Posterior vena cava (tissue), 2 donors: ENCODE measurements at regions of chr19 and their contacts with region 1.

Region 1: DNA sequence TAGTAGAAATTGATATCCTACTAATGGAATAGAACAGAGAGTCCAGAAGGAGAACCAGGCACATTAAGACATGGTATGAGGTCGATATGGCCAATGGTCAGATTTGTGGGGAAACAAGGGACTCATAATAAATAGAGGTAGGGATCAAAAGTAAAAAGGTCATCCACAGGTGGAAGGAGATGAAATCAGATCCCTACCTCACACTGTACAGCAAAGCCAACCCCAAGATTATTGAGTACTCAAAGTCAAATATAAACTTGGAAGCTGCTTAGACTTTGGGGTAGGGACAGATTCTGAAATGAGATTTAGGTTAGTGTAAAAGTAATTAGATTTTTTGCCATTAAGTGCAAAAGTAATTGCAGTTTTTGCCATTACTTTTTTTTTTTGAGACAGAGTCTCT is 40.7 kb downstream of the BICRA start:
- DNase-seq: no peak

Region 2: GRCh38 chr19:47630594-47630993 is 19.0 kb before region 1 on chr19:
- intact Hi-C with region 1: loop called in 1 of 2 experiments (anchors 1 kb)
- DNase-seq: no peak